ENCODE measurements at regions of chr13 and their contacts with region 1.

Region 1: DNA sequence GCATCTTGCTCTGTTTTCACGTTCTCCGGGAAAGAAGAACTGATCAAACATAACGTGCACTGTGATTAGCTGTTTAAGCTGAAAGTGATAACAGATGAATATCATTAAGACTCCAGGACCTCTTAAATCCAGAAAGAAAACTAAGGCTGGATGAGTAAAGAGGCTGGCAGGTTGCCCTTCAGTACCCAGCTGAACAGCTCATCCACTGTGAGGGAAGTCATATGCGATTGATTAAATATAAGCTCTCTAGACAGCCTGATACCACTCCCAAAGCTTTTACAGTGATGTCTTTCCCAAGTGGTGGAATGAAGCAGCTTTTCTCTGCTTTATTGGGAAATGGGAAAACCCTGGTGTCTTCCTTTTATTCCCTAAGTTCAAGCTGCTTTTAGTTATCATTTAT is 116.9 kb downstream of the EFNB2 start:
- DNase-seq: no peak
- ATAC-seq: no peak

Region 2: DNA sequence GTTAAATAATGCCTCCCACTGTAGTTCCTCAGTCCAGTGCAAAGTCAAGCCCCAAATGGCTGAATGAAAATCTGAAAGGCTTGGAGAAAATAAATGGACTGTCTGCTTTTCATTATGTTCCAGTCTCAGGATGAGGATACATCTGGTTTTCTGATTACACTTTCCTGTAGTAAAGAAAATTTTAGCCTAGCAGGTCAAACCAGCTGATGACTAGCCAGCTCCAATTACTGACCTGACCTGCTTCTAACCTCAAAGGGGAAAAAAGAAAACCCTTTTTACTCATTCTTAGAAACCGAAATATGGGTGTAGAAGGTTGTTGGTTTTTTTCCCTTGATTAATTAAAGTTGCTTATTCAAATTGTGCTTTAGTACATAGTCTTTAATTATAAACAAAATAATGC is 301.5 kb before region 1 on chr13:
- intact Hi-C with region 1: no loop called
- DNase-seq: no peak
- ATAC-seq: no peak

Region 3: GRCh38 chr13:106376401-106377112 is 42.0 kb before region 1 on chr13:
- intact Hi-C with region 1: loop called in 1 of 2 experiments (anchors 1 kb)
- DNase-seq: no peak
- ATAC-seq: no peak

Region 4: DNA sequence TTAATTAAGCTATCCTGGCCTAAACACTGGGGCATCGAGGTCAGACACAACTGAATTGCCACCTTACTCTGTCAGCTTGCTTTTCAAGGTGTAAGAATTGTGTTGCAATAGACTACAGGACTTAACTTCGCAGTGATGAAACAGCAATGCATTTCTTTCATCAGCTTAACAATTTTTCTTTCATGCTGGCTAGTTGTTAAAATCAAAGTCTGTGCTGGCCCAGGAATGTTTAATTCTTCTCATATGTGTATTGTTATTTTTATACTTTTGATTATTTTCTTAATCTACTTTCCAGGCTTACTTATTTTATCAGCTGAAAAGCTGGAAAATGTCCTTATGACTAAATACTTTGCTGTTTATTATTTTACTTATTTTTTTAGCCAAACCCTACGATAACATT is 37.2 kb after region 1 on chr13:
- intact Hi-C with region 1: no loop called
- DNase-seq: no peak
- ATAC-seq: no peak

Region 5: DNA sequence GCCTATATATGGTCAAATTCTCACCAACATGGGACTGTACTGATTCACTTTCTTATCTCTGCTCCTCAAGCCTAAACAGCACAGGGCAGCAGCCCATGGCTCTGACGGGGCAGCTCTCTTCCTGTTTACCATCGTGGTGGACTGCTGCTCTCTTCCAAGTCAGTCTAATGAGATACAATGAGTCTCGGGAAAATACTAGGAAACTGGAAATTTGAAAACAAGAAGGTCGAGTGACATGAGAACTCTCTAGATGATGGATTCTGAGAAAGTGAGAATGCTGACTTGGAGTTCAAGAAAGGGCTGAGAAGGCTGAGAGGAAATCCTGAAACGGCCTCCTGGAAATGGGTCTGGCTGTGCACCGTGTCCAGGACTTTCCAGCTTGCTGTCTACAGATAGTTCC is 272.2 kb after region 1 on chr13:
- intact Hi-C with region 1: no loop called
- DNase-seq: no peak
- ATAC-seq: peak; percentile 36 to 44

Measured in left cardiac atrium (tissue), 4 donors.